ENCODE measurements at regions of chr17 and their contacts with region 1.

Region 1: GRCh38 chr17:42019509-42020404 is at the start of gene NKIRAS2:
- DNase-seq: peak; percentile 93
- ATAC-seq: peak; percentile 76
- H3K4me3 Mint-ChIP-seq: peak within 1 kb of the TSS; percentile 97
- H3K27ac Mint-ChIP-seq: peak within 1 kb of the TSS; percentile 87
- H3K4me1 Mint-ChIP-seq: peaks cover 42% of the 10 kb centered on the region
- H3K27me3 Mint-ChIP-seq: no peaks in the 10 kb centered on the region
- total RNA-seq, gene NKIRAS2: 19.8 to 27.2 TPM

Region 2: DNA sequence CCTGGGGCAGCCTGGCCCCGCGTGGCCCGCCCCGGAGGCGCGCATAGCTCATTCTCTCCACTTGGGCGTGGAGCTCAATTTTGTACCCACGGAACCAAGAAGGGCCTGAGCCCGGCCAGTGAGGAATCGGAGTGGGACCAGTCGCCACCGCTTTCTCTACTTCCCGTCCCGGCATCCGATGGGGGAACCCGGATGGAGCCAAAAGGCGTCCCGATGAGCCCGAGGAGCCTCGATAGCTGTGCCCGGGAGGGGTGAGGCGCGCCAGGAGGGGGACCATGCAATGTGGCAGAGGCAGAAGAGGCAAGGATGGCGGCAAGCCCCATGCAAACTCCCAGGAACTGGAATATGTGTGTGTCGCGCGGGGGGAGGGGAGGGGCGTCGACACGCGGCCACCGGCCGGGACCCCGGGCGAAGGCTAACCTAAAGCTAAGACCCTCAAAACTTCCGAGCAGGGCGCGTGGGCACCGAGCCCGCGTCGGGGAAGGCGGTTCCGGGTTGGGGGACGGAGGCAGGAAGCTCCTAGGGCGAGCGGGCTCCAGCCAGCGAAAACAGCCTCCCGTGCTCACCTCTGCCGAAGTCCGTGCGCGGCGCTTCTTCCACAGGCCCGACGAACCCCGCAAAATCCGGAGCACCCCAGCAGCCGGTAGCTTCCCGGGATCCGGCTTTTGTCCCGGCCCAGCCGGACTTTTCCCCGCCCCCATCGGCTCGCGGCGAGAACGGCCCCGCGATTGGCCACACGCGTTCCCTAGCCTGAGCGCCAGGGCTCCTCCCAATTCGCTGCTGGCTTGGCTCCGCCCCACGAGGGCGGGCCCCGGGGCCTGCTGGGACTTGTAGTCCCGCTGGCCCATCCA is 101.2 kb before region 1 on chr17 and contains the start of gene ACLY:
- POLR2A ChIA-PET with region 1: interaction called, 12 read pairs
- DNase-seq: peak; percentile 99
- ATAC-seq: peak; percentile 95
- H3K4me3 Mint-ChIP-seq: peak within 1 kb of the TSS; percentile 98
- H3K27ac Mint-ChIP-seq: peak within 1 kb of the TSS; percentile 97
- H3K4me1 Mint-ChIP-seq: peaks cover 30% of the 10 kb centered on the region
- H3K27me3 Mint-ChIP-seq: no peaks in the 10 kb centered on the region
- total RNA-seq, gene ACLY: 142 to 153 TPM

Region 3: DNA sequence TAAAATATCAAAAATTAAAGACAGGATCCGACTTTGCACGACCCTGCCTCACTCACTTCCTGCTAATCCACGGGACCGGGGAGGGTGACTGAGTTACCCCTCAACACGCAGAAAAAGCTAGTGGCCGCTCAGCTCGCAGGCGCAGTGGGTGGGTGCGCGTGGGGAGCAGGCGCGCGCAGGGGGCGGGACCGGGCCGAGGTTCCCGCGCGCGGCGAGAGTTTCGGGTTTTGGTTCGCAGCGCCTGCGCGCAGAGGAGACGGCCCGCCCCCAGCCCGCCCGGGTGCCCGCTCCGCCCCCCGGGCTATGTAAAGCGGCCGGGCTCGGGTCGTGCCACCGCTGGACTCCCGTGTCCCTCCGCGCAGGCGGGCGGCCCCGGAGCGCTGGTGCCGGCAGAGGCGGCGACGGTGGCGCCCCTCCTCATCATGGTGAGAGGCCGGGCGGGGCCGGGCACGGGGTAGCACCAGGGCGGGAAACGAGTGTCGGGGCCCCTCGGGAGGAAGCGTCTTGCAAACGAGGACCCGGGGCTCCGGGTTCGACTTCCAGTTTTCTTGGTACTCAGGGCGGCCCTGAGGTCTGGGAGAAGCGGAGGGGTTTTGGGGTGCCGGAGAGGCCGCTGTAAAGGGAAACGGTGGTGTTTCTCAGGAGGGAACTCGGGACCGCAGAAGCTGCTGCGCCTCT is 53.2 kb before region 1 on chr17 and contains the start of gene CNP:
- POLR2A ChIA-PET with region 1: interaction called, 87 read pairs
- DNase-seq: peak; percentile 96
- ATAC-seq: peak; percentile 77
- H3K4me3 Mint-ChIP-seq: peak within 1 kb of the TSS; percentile 87
- H3K27ac Mint-ChIP-seq: peak within 1 kb of the TSS; percentile 86
- H3K4me1 Mint-ChIP-seq: peaks cover 28% of the 10 kb centered on the region
- H3K27me3 Mint-ChIP-seq: peaks cover 2% of the 10 kb centered on the region
- total RNA-seq, gene CNP: 75.8 to 83.0 TPM

Region 4: GRCh38 chr17:42120770-42121769 is 101.3 kb after region 1 on chr17 and contains the start of gene KAT2A:
- POLR2A ChIA-PET with region 1: interaction called, 20 read pairs
- DNase-seq: peak; percentile 85
- ATAC-seq: peak; percentile 91
- H3K4me3 Mint-ChIP-seq: peak within 1 kb of the TSS; percentile 71
- H3K27ac Mint-ChIP-seq: peak within 1 kb of the TSS; percentile 58
- H3K4me1 Mint-ChIP-seq: peaks cover 19% of the 10 kb centered on the region
- H3K27me3 Mint-ChIP-seq: no peaks in the 10 kb centered on the region
- total RNA-seq, gene KAT2A: 45.1 to 46.9 TPM